Heart left ventricle (tissue), 16 donors: ENCODE measurements at regions of chr14 and their contacts with region 1.

Region 1: GRCh38 chr14:56333359-56334292 is 215.4 kb downstream of the PELI2 start:
- DNase-seq: no peak
- ATAC-seq: peak; percentile 73 to 93 (median 88)
- H3K4me3 ChIP-seq: no peak overlapping the region
- H3K27ac ChIP-seq: peak overlapping the region in 6 of 12 donors; percentile 9 to 77 (median 38)
- H3K4me1 ChIP-seq: peaks cover 0 to 27% (median 6%) of the 10 kb centered on the region in 12 donors
- H3K27me3 ChIP-seq: no peaks in the 10 kb centered on the region
- CTCF ChIP-seq: no peak
- POLR2A ChIP-seq: no peak

Region 2: GRCh38 chr14:56271970-56272369 is 61.7 kb before region 1 on chr14:
- intact Hi-C with region 1: loop called in 1 of 10 experiments (anchors 5 kb)
- DNase-seq: no peak
- ATAC-seq: peak in 1 of 4 donors; percentile 62
- H3K4me3 ChIP-seq: no peak overlapping the region
- H3K27ac ChIP-seq: no peak overlapping the region
- H3K4me1 ChIP-seq: peaks cover 0 to 6% (median 0%) of the 10 kb centered on the region in 12 donors
- H3K27me3 ChIP-seq: no peaks in the 10 kb centered on the region
- CTCF ChIP-seq: no peak
- POLR2A ChIP-seq: no peak